ENCODE measurements at regions of chr16 and their contacts with region 1.

Region 1: DNA sequence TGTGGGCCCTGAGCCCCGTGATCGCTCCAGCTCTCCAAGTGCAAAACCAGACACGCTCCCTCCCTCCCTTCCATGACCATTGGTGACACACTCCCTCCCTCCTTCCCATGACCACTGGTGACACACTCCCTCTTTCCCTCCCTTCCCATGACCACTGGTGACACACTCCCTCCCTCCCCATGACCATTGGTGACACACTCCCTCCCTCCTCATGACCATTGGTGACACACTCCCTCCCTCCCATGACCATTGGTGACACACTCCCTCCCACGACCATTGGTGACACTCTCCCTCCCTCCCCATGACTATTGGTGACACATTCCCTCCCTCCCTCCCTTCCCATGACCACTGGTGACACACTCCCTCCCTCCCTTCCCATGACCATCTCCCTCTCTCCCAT is 56.3 kb downstream of the LMF1 start:
- DNase-seq: no peak
- H3K4me3 ChIP-seq: no peak overlapping the region
- H3K27ac ChIP-seq: peak overlapping the region in 58 of 59 donors; percentile 85 to 100 (median 98)
- H3K27me3 ChIP-seq: no peaks in the 10 kb centered on the region
- CTCF ChIP-seq: no peak

Region 2: GRCh38 chr16:977081-977701 is 62.8 kb after region 1 on chr16:
- intact Hi-C with region 1: loop called (anchors 2 kb)
- DNase-seq: peak in 7 of 10 donors; percentile 70 to 83 (median 79)
- H3K4me3 ChIP-seq: peak overlapping the region in 10 of 59 donors; percentile 3 to 24 (median 12)
- H3K27ac ChIP-seq: peak overlapping the region; percentile 72 to 100 (median 98)
- H3K27me3 ChIP-seq: peaks cover 0 to 11% (median 0%) of the 10 kb centered on the region in 45 donors
- CTCF ChIP-seq: peak in 1 of 56 donors; percentile 10

Region 3: DNA sequence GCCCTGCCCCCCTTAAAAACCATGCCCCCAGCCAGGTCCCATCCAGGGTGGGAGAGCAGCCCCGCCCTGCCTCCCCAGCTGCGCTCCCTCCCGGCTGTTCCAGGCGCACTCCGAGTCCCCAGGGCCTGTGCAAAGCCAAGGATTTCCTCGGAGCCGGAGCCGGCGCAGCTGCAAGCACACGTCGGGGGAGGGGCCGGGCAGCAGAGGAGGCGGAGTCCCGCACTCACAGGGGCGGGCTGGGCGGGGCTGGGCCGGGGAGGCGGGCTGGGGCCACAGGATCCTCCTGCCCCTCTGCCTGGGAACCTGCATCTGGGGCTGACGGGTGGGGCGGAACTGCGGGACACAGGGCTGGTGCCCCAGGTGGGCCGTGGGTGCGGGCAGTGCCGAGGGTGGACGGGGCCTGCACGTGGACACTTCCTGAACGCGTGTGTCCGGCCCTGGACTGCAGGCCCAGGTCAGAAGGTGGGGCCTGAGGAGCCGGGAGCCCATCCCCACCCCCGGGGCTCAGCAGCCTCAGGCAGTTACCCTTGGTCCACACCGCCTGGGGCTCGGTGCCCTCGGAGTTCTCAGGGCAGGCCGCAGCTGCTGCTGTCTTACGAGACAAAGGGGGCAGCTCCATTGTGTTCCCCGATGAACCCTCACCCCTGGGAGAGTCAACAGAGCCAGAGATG is 134.1 kb after region 1 on chr16:
- intact Hi-C with region 1: loop called (anchors 2 to 10 kb)
- DNase-seq: peak in 9 of 10 donors; percentile 73 to 88 (median 83)
- H3K4me3 ChIP-seq: peak overlapping the region in 5 of 59 donors; percentile 3 to 30 (median 8)
- H3K27ac ChIP-seq: peak overlapping the region; percentile 68 to 99 (median 94)
- H3K27me3 ChIP-seq: peaks cover 0 to 3% (median 0%) of the 10 kb centered on the region in 45 donors
- CTCF ChIP-seq: peak in 1 of 56 donors; percentile 10

Region 4: DNA sequence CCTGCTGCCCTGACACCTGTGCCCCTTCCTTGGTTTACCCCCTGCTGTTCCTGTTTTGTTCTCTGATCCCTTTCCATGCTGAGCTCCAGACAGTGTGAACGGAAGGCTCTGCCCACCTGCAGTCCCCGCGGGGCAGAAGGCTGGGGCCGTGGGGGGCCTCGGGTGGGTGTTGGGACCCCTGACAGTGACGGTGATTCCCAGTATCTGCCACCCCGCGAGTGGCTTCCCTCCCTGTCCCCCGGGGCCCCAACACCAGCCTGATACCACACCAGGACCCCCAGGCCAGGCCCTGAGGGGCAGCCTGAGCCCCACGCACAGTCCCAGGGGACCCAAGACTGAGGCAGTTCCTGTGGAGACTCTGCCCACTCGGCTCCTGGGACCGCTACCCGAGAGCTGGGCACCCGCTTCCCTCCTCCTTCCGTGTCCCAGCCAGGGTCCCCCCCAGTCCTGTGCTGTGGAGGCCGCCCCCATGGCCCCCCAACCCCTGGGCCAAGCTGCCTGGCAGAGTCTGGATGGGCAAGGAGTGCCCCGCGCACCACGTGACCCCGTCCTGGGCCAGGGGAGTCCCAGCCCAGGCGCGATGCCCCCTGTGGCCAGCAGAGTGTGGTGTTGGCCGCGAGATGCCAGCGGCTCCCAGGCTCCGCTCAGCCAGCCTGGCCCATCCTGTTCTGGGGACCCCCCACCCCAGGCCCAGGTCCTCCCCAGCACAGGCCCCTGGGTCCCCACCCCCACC is 191.6 kb after region 1 on chr16:
- intact Hi-C with region 1: no loop called
- DNase-seq: peak; percentile 57 to 85 (median 74)
- H3K4me3 ChIP-seq: no peak overlapping the region
- H3K27ac ChIP-seq: no peak overlapping the region
- H3K27me3 ChIP-seq: peaks cover 0 to 65% (median 22%) of the 10 kb centered on the region in 45 donors
- CTCF ChIP-seq: peak; percentile 48 to 93 (median 82)

Region 5: DNA sequence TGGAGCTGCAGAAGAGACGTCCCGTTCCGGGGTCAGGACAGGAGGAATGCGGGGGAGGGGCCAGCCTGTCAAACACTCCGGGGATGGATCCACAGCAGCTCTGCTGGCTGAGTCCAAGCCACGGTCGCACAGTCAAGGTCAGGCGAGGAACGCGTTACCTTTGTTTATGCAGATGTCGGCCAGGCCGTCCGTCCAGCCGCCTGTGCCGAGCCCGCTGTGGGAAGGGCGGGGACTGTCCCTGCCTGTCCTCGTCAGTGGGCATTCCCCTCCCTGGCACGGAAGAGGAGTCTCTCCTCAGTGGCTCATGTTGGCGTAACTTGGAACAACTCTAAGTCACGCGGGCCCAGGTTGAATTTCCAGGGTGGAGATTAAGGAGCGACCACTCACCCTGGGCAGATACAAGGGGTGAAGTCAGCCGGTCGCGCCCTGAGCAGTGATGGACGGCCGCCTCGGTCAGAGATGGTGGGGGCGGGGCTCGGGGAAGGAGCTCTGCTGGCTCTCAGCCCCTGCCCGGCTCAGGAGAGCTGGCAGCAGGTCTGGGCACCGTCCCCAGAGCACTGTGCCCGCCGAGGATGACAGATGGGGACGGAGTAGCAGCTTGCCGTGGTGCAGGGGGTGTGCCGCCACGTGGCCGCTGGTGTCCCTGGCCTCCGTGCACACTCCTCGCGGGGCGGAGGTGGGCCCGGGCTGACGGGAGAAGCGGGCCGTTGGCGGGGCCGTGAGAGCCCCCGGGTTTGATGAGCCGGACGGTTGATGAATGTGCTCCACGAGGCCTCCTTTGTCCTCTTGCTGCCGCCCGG is 245.7 kb after region 1 on chr16:
- intact Hi-C with region 1: no loop called
- DNase-seq: peak; percentile 29 to 96 (median 72)
- H3K4me3 ChIP-seq: peak overlapping the region in 7 of 59 donors; percentile 6 to 31 (median 15)
- H3K27ac ChIP-seq: no peak overlapping the region
- H3K27me3 ChIP-seq: peaks cover 0 to 95% (median 23%) of the 10 kb centered on the region in 45 donors
- CTCF ChIP-seq: no peak